ENCODE measurements at regions of chr20 and their contacts with region 1.

Region 1: GRCh38 chr20:58907399-58908137 is 55.1 kb downstream of the GNAS start:
- DNase-seq: peak; percentile 83
- H3K4me3 ChIP-seq: peak overlapping the region in 1 of 4 donors; percentile 22
- H3K27ac ChIP-seq: peak overlapping the region; percentile 69 to 79 (median 78)
- H3K4me1 ChIP-seq: peaks cover 10 to 33% (median 12%) of the 10 kb centered on the region in 4 donors
- H3K27me3 ChIP-seq: no peaks in the 10 kb centered on the region
- CTCF ChIP-seq: no peak
- EP300 ChIP-seq: no peak
- POLR2A ChIP-seq: no peak

Region 2: DNA sequence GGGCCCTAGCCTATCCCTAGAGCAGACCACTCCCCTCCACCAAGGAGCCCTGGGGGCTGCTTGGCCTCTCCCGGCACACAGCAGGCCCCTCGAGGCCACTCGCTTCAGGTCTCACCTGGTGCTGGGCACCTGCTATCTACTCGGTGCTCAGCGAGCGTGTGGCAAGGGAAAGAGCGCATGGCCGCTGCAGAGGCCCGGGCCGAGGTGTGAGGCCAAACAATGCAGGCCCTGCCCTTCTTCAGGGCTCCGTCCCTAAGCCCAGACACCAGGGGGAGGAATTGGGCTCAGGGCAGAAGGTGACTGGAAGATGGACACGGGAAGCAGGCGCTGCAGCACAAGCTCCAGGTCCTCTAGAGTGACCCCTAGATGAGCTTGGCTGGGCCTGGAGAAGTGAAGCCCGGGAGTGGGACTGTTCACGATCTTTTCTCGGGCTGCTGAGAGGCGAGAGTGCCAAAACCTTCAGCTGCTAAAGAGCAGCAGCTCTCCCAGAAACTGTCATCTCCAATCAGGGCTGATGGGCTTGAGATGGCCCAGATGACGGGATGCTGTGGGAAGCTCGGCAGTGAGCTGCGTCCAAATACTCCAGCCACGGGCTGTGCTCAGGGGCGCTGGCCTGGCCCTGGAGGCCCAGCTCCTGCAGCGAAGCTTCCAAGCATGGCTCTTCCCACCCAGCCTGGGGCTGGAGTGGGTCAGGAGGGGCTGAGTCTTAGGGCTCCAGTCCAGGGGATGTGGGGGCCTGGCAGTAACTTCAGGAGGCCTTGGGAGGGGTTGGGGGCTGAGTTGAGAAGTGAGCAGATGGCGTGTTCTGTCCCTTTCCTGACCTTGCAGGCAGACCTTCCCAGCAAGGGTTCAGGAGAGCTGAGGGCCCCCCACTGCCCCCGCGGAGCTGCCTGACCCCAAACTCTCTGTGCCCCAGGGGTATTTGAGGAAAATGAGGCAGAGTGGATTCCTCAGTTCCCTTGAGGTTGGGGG is 436.1 kb before region 1 on chr20:
- in situ Hi-C with region 1: no loop called
- intact Hi-C with region 1: no loop called
- DNase-seq: peak; percentile 48
- H3K4me3 ChIP-seq: no peak overlapping the region
- H3K27ac ChIP-seq: peak overlapping the region in 3 of 4 donors; percentile 11 to 70 (median 46)
- H3K4me1 ChIP-seq: peaks cover 0 to 16% (median 0%) of the 10 kb centered on the region in 4 donors
- H3K27me3 ChIP-seq: peaks cover 3% of the 10 kb centered on the region
- CTCF ChIP-seq: no peak
- EP300 ChIP-seq: no peak
- POLR2A ChIP-seq: no peak

Region 3: GRCh38 chr20:58980700-58981627 is 73.4 kb after region 1 on chr20 and contains the start of gene NELFCD:
- in situ Hi-C with region 1: loop called in 1 of 4 experiments (anchors 10 kb)
- intact Hi-C with region 1: no loop called
- DNase-seq: peak; percentile 93
- H3K4me3 ChIP-seq: peak within 1 kb of the TSS; percentile 83 to 96 (median 88)
- H3K27ac ChIP-seq: peak within 1 kb of the TSS; percentile 87 to 94 (median 89)
- H3K4me1 ChIP-seq: peaks cover 7 to 31% (median 20%) of the 10 kb centered on the region in 4 donors
- H3K27me3 ChIP-seq: no peaks in the 10 kb centered on the region
- CTCF ChIP-seq: no peak
- EP300 ChIP-seq: no peak
- POLR2A ChIP-seq: peak; percentile 52
- total RNA-seq, gene NELFCD: 43.7 to 68.1 (median 55.1) TPM

Measured in transverse colon (tissue), 4 donors.